GM13977 (cell line): ENCODE measurements at regions of chrX and their contacts with region 1.

Region 1: DNA sequence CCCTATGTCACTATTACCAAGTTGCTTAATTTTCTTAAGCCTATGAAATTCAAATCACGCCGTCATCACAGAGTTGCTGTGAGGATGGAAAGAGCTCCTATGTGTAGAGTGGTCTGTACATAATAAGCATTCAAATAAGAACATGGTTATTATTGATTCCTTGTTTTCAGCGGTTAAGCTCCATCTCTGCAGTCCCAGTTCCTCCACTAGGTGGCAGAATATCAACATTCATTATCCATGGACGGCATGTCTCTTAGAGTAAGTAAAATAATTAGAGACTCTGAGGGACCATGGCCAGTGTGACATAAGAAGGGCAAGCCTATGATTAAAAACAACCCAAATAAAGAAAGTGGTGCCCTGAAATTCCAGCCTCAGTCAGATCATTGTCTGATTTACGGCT is 132.5 kb upstream of the NHS start:
- DNase-seq: peak; percentile 64
- CTCF ChIP-seq: peak; percentile 80

Region 2: DNA sequence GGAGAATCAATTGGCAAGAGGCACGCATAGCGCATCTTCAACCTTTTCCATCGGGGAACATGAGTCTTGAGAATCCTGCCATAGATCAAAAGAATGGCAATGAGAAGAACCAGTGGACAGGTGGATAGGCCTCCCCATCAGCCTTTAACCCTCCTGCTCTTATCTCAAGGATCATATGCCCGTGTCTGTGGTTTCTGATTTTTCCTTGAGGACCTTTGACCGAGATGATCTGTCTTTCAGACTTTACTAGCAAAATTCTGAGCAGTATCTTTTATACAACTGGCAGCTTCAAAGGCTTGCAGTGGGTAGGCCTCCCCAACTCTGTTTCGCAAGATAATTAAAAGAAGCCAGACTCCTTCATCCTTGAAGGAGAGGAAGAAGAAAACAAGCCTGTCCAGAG is 121.7 kb before region 1 on chrX:
- in situ Hi-C with region 1: no loop called
- DNase-seq: no peak
- CTCF ChIP-seq: no peak

Region 3: GRCh38 chrX:17154001-17154400 is 88.5 kb before region 1 on chrX:
- in situ Hi-C with region 1: no loop called
- DNase-seq: no peak
- CTCF ChIP-seq: no peak

Region 4: DNA sequence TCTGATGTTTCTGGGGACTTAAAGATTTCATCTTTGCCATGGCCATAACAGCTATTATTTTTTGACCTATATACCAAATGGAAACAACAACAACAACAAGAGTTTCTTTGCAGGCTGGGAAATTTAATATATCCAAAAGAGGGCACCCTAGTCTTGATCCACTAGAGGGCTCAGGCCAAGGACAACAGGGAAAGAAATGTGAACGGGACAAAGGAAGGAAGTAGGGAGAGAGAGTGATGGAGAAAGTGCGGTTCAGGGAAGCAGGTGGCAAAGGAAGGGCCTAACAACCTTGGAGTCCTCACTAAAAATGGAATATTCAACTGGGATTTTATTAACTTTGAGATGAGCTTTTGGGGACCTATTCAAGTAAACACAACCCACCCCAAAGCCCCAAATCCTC is 427.0 kb after region 1 on chrX:
- in situ Hi-C with region 1: no loop called
- DNase-seq: no peak
- CTCF ChIP-seq: no peak

Region 5: GRCh38 chrX:17689971-17690409 is 447.5 kb after region 1 on chrX:
- in situ Hi-C with region 1: loop called (anchors 25 kb)
- DNase-seq: peak; percentile 57
- CTCF ChIP-seq: peak; percentile 79

Region 6: DNA sequence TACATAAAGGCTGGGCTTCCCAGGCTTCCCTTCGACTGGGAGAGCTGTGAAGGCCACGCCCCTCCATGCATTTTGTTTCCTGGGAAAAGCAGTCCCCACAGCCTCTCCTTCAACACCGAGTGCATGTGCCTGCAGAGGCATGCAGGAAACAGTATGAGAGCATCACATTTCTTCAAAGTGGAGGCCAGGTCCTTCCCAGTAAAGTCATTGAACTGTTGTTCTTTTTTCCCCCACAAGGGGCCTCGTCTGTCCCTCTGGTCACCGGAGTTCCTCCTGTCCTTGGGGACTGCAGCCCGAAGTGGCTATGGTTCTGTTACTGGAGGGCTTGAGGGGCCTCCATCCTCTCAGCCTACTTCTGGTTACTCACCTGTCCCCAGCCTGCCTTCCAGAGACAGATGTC is 562.6 kb after region 1 on chrX:
- in situ Hi-C with region 1: no loop called
- DNase-seq: no peak
- CTCF ChIP-seq: no peak